KBM-7 (cell line): ENCODE measurements at regions of chr6 and their contacts with region 1.

Region 1: DNA sequence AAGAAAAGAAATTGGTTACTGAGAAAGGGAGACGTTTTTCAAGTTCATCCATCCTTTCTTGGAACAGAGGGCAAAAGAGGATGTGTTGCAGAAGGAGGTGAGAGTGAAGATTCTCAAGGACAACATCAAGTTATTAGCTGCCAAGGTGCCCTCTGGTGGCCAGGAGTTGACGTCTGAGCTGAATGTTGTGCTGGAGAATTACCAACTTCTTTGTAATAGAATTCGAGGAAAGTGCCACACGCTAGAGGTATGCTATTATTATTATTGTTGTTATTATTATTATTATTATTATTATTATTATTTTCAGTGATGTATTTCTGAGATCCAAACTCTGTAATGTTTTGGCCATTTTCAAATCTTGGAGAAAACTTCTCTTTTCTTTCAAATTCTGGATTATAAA is 197.0 kb downstream of the UTRN start:
- DNase-seq: peak; percentile 85

Region 2: DNA sequence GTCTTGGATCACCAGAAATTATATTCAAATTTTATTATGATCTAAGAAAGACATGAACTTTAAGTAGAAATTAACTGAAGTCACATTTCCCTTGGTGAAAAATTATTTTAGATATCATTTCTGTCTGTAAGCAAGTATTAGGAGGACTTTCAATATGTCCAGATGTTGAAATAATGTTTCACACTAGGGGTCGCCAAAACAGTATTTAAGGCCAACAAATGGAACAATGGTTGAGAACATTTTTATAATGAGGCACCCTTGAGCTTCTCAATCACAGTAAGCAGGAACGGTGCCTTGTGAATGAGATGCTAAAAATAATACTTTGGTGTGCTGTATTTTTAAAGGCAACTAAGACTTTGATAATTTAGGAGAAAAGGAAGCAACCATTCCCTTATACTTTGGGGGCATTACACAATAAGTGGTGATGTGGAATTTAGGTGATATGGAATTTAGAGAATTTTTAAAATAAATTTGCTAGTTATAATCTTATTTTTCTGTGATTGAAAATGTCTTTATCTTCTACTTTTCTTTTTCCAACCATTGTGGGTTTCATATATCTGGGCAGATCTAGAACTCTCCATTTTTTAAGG is 377.1 kb before region 1 on chr6:
- in situ Hi-C with region 1: loop called (anchors 25 kb)
- DNase-seq: peak; percentile 69

Region 3: GRCh38 chr6:144566868-144567615 is 84.9 kb after region 1 on chr6:
- in situ Hi-C with region 1: no loop called
- DNase-seq: peak; percentile 61